G401 (cell line): ENCODE measurements at regions of chr1 and their contacts with region 1.

Region 1: GRCh38 chr1:36864182-36864822 is 170.0 kb downstream of the GRIK3 start:
- DNase-seq: no peak

Region 2: DNA sequence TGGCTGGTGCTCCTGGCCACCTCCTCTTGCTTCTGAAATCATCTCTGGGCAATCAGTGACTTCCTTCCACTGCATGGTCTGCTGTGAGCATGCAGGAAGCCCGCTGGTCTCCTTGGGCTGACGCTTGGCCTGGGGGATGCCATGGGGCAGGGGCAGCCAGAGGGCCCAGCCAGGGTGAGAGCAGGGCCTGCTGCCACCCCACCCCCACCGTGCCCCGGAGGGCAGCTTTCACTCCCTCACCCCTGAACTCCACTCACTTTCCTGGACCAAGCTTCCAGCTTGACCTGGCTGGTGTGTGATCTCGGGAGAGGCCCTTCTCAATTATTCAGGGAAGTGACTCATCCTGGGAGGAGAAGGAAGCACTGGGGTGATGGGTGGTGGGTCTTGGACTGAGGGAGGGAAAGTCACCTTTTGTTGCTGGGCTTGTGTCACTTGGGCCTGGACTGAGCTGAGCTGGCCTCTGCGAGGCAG is 111.4 kb before region 1 on chr1:
- in situ Hi-C with region 1: no loop called
- DNase-seq: no peak

Region 3: DNA sequence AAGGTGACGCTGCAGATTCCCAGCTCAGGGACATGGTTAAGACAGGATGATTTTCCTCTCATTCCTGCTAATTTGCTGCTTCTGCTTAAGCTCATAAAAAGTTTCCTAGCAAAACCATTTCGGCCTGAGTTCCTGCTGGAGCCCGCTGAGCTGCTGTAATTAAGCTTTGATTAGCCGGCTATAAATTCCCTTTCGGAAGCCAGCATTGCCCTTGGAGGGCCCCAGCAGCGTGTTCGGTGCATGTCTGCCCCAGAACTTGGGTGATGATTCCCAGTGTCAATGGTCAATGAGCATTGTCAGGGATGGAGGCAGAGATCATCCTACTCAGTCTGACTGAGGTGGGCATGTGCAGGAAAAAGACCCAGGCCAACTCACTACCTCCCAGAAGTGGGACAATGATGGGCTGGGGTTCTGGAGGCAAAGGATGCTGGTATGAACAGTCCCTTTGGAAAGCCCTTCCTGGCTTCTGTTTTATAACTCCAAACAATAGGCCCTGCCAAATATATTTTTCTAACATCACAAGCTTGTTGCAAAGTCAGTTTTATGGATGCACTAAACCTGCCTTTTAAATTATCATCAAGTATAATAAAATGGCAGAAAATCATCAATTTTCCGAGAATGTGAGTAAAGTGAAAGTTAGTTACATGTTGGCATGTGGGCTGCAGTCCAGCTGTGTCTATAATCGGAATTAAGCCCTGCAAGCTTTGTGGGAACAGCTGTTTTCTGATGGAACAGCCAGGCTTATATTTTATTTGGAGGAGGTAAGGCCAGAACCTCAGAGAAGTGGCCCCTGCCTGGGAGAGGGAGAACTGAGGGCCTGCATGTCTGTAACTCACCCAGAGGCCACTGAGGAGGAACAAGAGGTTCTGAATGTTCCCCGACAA is 87.1 kb before region 1 on chr1:
- in situ Hi-C with region 1: loop called (anchors 5 kb)
- DNase-seq: no peak

Region 4: GRCh38 chr1:36831181-36831810 is 33.0 kb before region 1 on chr1:
- in situ Hi-C with region 1: no loop called
- DNase-seq: no peak

Region 5: GRCh38 chr1:36934061-36934460 is 69.8 kb after region 1 on chr1:
- in situ Hi-C with region 1: no loop called
- DNase-seq: no peak

Region 6: DNA sequence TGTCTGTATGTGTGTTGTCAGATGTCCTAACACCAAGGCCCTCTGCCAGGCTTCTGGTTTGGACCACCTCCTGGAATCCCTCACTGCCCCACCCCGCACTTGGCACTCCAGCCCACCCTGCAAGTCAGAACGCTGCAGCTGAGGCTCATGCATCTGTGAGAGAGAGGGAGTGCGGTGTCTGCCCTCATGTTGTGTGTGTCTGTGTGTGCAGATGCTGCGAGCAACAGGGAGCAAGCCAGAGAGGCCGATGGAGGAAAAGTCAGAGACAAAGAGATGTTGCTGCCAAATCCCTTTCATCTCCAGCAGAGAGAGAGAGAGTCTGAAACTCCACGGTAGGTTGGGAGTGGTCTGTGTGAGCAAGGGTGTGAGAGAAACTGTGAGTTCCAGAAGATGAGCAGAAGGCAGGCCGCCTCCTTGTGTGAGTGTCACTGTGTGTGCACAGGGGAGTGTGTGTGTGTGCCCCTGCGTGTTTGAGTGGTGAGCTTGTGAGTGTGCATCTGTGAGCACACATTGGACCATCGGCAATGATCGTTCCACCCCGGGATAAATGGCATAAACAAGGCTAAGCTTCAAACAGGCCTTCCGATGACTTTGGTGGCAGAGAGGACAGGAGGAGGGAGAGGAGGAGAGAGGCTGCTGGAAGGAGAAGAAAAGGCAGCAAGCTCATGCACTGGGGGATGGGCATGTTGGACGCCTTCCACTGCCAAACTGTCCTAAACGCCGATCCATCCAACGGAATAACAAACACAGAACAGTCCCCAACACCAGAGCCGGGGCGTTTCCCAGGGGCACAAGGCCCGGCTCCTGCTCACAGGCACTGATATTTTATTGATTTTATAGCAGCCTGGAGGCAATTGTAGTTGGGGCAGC is 269.2 kb after region 1 on chr1:
- in situ Hi-C with region 1: no loop called
- DNase-seq: no peak